ENCODE measurements at regions of chr6 and their contacts with region 1.

Region 1: DNA sequence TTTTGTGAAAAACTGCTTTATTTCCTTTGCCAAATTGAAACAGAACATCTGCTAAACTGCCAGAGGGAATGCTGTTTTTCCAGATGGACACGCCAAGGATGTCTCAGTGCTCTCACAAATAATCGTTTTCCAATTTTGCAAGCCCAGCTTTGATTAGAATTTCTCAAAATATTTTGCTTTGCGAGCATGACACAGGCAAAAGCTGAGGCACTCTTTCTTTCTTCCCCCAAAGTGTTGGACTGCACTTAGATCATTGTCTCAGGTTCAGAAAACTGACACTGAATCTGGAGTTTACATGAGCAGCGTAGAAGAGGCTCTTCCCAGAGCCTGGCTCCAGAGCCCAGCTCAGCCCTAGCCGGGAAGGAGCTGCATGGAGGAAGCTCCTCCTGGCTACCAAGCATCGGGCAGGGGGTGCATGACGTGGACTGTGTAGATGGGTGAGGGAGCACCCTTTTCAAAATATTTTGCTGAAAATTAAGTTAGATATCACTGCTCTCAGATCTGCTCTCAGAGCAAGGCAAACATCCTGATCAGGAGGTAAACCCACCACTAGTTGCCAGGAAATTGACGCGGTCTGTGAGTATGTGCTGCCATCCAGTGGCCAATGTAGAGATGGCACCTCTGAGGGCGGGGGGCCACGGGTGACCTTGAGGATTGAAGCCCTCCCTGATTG is 107.5 kb downstream of the SLC22A3 start:
- DNase-seq: peak; percentile 4
- H3K4me3 ChIP-seq: peak overlapping the region; percentile 33
- CTCF ChIP-seq: peak; percentile 93

Region 2: DNA sequence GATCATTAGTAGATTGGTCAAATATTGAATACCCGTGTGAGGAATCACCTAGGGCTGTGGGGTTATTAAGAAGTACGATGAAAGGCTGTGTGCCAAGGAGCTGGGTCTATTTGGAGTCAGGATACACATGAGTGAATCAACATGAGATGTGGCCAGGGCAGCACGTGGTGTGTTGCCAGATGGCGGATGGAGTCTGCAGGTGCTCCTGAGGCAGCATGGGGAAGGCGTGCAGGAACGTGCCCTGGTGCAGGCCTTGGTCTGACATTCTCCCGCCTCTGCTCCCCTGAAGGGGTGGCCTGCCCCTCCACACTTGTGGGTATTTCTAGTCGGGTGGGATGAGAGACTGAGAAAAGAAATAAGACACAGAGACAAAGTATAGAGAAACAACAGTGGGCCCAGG is 373.1 kb before region 1 on chr6:
- CTCF ChIA-PET with region 1: interaction called, 195 read pairs
- POLR2A ChIA-PET with region 1: no interaction called
- DNase-seq: no peak
- H3K4me3 ChIP-seq: no peak overlapping the region
- CTCF ChIP-seq: no peak

Region 3: GRCh38 chr6:160095146-160095845 is 360.4 kb before region 1 on chr6:
- CTCF ChIA-PET with region 1: interaction called, 195 read pairs
- POLR2A ChIA-PET with region 1: no interaction called
- DNase-seq: no peak
- H3K4me3 ChIP-seq: no peak overlapping the region
- CTCF ChIP-seq: no peak

Region 4: DNA sequence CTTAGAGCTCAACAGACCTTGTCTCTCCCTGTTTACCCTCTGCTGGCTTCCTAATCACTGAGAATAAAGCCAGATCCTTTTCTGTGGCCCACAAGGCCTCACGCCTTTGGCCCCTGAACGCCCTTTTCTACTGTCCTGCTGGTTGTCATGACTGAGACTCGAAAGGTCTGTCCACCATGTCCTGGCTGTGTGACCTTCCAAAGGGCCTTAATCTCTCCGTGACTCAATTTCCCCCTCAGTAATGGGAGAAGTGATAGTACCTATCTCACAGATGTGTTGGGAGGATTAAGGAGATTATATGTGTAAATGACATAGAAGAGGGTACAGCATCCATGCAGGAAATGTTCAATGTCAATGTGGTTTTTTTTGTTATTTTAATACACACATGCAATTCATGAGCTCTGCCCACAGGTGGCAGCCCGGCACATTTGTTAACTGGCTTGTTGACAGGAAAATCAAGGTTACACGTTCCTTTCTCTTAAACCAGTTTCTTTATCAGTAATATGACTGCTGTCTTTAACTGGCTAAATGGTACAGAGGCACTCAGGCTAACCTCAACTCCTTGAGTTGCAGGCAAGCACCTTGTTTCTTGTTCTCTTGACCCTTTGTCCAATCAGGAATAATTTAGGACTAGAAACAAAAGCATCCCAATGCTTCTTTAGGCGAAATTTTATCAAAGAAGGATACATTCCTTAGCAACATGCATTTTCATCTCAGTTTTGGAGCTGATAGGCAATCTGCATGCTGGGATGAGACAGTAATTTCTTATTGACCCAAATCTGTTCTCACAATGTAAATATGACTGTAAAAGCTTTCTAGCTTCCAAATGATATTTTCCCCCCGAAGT is 317.5 kb before region 1 on chr6:
- CTCF ChIA-PET with region 1: interaction called, 47 read pairs
- POLR2A ChIA-PET with region 1: no interaction called
- DNase-seq: no peak
- H3K4me3 ChIP-seq: no peak overlapping the region
- CTCF ChIP-seq: peak; percentile 52

Region 5: GRCh38 chr6:160226118-160226541 is 229.5 kb before region 1 on chr6:
- CTCF ChIA-PET with region 1: no interaction called
- POLR2A ChIA-PET with region 1: no interaction called
- DNase-seq: no peak
- H3K4me3 ChIP-seq: no peak overlapping the region
- CTCF ChIP-seq: no peak

Measured in AG04449 (cell line).